CD8-positive, alpha-beta memory T cell (primary cell): ENCODE measurements at regions of chr7 and their contacts with region 1.

Region 1: DNA sequence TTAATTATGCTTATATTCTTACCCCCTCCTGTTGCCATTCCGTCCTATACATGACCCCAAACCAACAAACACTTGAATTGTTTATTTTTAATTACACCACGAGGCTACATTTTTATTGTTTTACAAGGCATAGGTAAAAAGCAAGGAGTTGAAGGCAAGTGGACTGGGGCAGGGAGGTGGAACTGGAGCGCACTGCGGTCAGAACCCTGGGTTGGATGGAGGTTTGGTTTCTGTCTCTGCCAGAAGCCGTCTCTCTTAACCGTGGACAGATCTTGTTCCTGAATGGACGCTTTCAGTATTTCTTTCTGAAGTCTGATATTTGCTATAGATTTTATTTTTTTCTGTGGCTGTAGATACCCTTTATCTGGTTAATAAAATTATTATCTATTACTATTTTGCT is 19.9 kb upstream of the IGFBP3 start:
- DNase-seq: no peak
- H3K4me3 ChIP-seq: peak overlapping the region; percentile 61
- H3K4me3 Mint-ChIP-seq: peak overlapping the region; percentile 83 to 93 (median 86)
- H3K27ac ChIP-seq: no peak overlapping the region
- H3K27ac Mint-ChIP-seq: peak overlapping the region in 4 of 8 donors; percentile 59 to 83 (median 73)
- H3K4me1 ChIP-seq: no peaks in the 10 kb centered on the region
- H3K4me1 Mint-ChIP-seq: peaks cover 28 to 50% (median 30%) of the 10 kb centered on the region in 3 donors
- H3K27me3 ChIP-seq: no peaks in the 10 kb centered on the region
- H3K27me3 Mint-ChIP-seq: peaks cover 0 to 9% of the 10 kb centered on the region in 2 donors

Region 2: GRCh38 chr7:45923290-45923689 is 17.6 kb before region 1 on chr7:
- CTCF ChIA-PET with region 1: interaction called, 12 read pairs
- POLR2A ChIA-PET with region 1: interaction called, 3 read pairs
- DNase-seq: peak in 3 of 5 donors; percentile 22 to 67 (median 33)
- H3K4me3 ChIP-seq: peak overlapping the region; percentile 33
- H3K4me3 Mint-ChIP-seq: peak overlapping the region; percentile 58 to 78 (median 70)
- H3K27ac ChIP-seq: no peak overlapping the region
- H3K27ac Mint-ChIP-seq: peak overlapping the region in 1 of 8 donors; percentile 78
- H3K4me1 ChIP-seq: peaks cover 13% of the 10 kb centered on the region
- H3K4me1 Mint-ChIP-seq: peaks cover 17 to 47% (median 31%) of the 10 kb centered on the region in 3 donors
- H3K27me3 ChIP-seq: no peaks in the 10 kb centered on the region
- H3K27me3 Mint-ChIP-seq: peaks cover 37 to 45% of the 10 kb centered on the region in 2 donors